ENCODE measurements at regions of chr14 and their contacts with region 1.

Region 1: DNA sequence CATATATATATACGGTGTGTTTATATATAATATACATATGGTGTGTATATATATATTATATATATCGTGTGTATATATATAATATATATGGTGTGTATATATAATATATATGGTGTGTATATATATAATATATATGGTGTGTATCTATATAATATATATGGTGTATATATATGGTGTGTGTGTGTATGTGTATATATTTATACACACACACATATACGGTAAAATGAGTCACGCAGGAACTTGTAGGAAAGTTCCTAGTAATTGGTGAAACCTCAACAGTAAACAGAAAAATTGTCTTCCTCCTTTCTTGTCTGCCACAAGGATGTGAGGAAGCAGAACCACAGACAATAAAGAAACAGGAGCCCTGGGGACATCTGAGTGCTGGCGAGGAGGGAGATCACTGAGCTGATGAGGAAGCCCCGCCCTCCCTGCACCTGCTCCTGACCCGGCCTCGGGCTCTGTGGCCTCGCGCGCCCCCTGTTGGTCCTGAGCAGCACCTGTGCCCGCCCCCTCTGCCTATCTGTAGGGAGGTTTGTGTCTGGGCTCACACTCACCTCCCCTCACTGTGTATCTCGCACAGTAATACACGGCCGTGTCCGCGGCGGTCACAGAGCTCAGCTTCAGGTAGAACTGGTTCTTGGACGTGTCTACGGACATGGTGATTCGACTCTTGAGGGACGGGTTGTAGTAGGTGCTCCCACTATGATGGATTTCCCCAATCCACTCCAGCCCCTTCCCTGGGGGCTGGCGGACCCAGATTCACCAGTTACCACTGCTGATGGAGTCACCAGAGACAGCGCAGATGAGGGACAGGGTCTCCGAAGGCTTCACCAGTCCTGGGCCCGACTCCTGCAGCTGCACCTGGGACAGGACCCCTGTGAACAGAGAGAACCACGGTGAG is 1079.4 kb downstream of the TMEM121 start:
- DNase-seq: peak; percentile 73 to 88 (median 78)
- ATAC-seq: peak; percentile 100
- H3K4me3 ChIP-seq: no peak overlapping the region
- H3K4me3 Mint-ChIP-seq: no peak overlapping the region
- H3K27ac ChIP-seq: no peak overlapping the region
- H3K27ac Mint-ChIP-seq: no peak overlapping the region
- H3K4me1 ChIP-seq: peaks cover 7% of the 10 kb centered on the region
- H3K4me1 Mint-ChIP-seq: no peaks in the 10 kb centered on the region
- H3K27me3 ChIP-seq: peaks cover 2 to 32% of the 10 kb centered on the region in 2 experiments
- H3K27me3 Mint-ChIP-seq: peaks cover 79% of the 10 kb centered on the region
- CTCF ChIP-seq: peak; percentile 61

Region 2: GRCh38 chr14:106556665-106557289 is 49.0 kb before region 1 on chr14:
- CTCF ChIA-PET with region 1: no interaction called
- POLR2A ChIA-PET with region 1: no interaction called
- intact Hi-C with region 1: no loop called
- DNase-seq: peak; percentile 65 to 82 (median 70)
- ATAC-seq: peak; percentile 66
- H3K4me3 ChIP-seq: no peak overlapping the region
- H3K4me3 Mint-ChIP-seq: no peak overlapping the region
- H3K27ac ChIP-seq: no peak overlapping the region
- H3K27ac Mint-ChIP-seq: no peak overlapping the region
- H3K4me1 ChIP-seq: peaks cover 5% of the 10 kb centered on the region
- H3K4me1 Mint-ChIP-seq: no peaks in the 10 kb centered on the region
- H3K27me3 ChIP-seq: peaks cover 3 to 9% of the 10 kb centered on the region in 2 experiments
- H3K27me3 Mint-ChIP-seq: peaks cover 13% of the 10 kb centered on the region
- CTCF ChIP-seq: peak; percentile 96

Region 3: DNA sequence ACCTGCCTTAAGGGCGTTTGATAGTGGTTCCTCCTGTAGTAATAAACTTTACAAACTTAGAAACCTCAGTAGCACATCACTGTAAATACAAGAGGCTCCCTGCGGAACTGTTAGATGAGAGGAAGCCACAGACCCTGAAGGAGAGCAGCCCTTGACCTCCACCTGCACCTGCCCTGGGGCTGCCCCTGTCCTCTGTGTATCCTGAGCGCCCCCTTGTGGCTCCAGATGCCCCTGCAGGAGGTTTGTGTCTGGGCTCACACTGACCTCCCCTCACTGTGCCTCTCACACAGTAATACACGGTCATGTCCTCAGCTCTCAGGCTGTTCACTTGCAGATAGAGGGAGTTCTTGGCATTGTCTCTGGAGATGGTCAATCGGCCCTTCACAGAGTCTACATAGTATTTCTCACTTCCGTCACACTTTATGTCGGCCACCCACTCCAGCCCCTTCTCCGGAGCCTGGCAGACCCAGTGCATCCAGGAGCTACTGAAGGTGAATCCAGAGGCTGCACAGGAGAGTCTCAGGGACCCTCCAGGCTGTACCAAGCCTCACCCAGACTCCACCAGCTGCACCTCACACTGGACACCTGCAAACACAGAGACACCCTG is 19.6 kb before region 1 on chr14:
- CTCF ChIA-PET with region 1: no interaction called
- POLR2A ChIA-PET with region 1: no interaction called
- intact Hi-C with region 1: loop called in 1 of 2 experiments (anchors 2 kb)
- DNase-seq: peak; percentile 45 to 75 (median 56)
- ATAC-seq: peak; percentile 78
- H3K4me3 ChIP-seq: no peak overlapping the region
- H3K4me3 Mint-ChIP-seq: no peak overlapping the region
- H3K27ac ChIP-seq: no peak overlapping the region
- H3K27ac Mint-ChIP-seq: no peak overlapping the region
- H3K4me1 ChIP-seq: peaks cover 6% of the 10 kb centered on the region
- H3K4me1 Mint-ChIP-seq: peaks cover 11% of the 10 kb centered on the region
- H3K27me3 ChIP-seq: peaks cover 0 to 4% of the 10 kb centered on the region in 2 experiments
- H3K27me3 Mint-ChIP-seq: peaks cover 27% of the 10 kb centered on the region
- CTCF ChIP-seq: peak; percentile 75

Region 4: GRCh38 chr14:106619606-106620005 is 13.8 kb after region 1 on chr14:
- CTCF ChIA-PET with region 1: interaction called, 14 read pairs
- POLR2A ChIA-PET with region 1: no interaction called
- intact Hi-C with region 1: no loop called
- DNase-seq: no peak
- ATAC-seq: no peak
- H3K4me3 ChIP-seq: no peak overlapping the region
- H3K4me3 Mint-ChIP-seq: no peak overlapping the region
- H3K27ac ChIP-seq: no peak overlapping the region
- H3K27ac Mint-ChIP-seq: no peak overlapping the region
- H3K4me1 ChIP-seq: peaks cover 9% of the 10 kb centered on the region
- H3K4me1 Mint-ChIP-seq: peaks cover 8% of the 10 kb centered on the region
- H3K27me3 ChIP-seq: no peaks in the 10 kb centered on the region
- H3K27me3 Mint-ChIP-seq: peaks cover 42% of the 10 kb centered on the region
- CTCF ChIP-seq: no peak